ENCODE measurements at regions of chr18 and their contacts with region 1.

Region 1: GRCh38 chr18:7272311-7273049 is 41.6 kb downstream of the LRRC30 start:
- DNase-seq: peak; percentile 22 to 56
- ATAC-seq: peak; percentile 74 to 79
- H3K4me3 ChIP-seq: peak overlapping the region in 3 of 4 donors; percentile 8 to 26 (median 25)
- H3K27ac ChIP-seq: peak overlapping the region; percentile 56 to 78 (median 68)
- H3K4me1 ChIP-seq: peaks cover 0 to 5% of the 10 kb centered on the region in 2 donors
- H3K27me3 ChIP-seq: no peaks in the 10 kb centered on the region
- CTCF ChIP-seq: peak; percentile 10 to 67 (median 40)
- POLR2A ChIP-seq: no peak

Region 2: GRCh38 chr18:6948281-6949055 is 324.0 kb before region 1 on chr18:
- in situ Hi-C with region 1: no loop called
- intact Hi-C with region 1: no loop called
- DNase-seq: no peak
- ATAC-seq: no peak
- H3K4me3 ChIP-seq: no peak overlapping the region
- H3K27ac ChIP-seq: no peak overlapping the region
- H3K4me1 ChIP-seq: no peaks in the 10 kb centered on the region
- H3K27me3 ChIP-seq: no peaks in the 10 kb centered on the region
- CTCF ChIP-seq: no peak
- POLR2A ChIP-seq: no peak

Region 3: GRCh38 chr18:7117390-7118355 is 154.8 kb before region 1 on chr18 and contains the start of gene LAMA1:
- in situ Hi-C with region 1: no loop called
- intact Hi-C with region 1: no loop called
- DNase-seq: no peak
- ATAC-seq: no peak
- H3K4me3 ChIP-seq: peak within 1 kb of the TSS; percentile 43 to 65 (median 52)
- H3K27ac ChIP-seq: no peak within 1 kb of the TSS
- H3K4me1 ChIP-seq: peaks cover 10 to 15% of the 10 kb centered on the region in 2 donors
- H3K27me3 ChIP-seq: peaks cover 31 to 62% (median 47%) of the 10 kb centered on the region in 3 donors
- CTCF ChIP-seq: no peak
- POLR2A ChIP-seq: no peak
- total RNA-seq, gene LAMA1: 0.05 to 0.44 (median 0.09) TPM

Region 4: DNA sequence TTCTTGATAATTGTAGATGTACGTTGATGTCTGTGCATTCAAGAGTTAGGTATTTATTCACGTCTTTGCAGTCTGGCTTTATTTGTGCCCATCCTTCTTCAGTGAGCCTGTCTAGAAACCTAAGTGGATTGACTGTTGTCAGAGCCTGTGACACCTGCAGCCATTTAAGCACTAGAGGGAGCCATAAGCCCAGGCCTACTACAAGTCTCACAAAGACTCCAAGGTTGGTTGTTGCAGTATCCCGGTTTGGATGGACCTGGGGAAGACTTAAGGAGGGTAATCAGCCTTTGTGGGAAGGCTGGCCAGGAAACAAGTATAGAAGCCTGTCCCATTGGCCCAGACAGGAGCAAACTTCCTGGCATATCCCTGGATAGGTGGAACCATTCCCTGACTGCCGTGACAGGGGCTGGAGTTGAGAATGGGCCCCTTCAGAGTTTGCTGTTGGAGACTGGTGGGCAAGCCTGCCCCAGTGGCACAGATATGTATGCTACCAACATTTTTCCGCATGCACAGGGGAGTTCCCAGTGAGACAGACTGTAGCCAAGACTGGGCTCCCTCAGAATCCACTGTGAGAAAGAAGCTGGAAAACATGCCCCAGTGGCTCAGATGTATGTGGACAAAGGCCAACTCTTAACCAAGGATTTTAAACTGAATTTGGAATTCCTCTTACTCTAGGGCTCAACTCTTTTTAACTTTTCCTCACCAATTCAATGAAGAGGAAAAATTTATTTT is 50.9 kb before region 1 on chr18:
- in situ Hi-C with region 1: no loop called
- intact Hi-C with region 1: loop called (anchors 5 kb)
- DNase-seq: peak; percentile 22 to 66
- ATAC-seq: peak; percentile 98 to 100
- H3K4me3 ChIP-seq: no peak overlapping the region
- H3K27ac ChIP-seq: no peak overlapping the region
- H3K4me1 ChIP-seq: peaks cover 3 to 7% of the 10 kb centered on the region in 2 donors
- H3K27me3 ChIP-seq: no peaks in the 10 kb centered on the region
- CTCF ChIP-seq: peak; percentile 58 to 88 (median 80)
- POLR2A ChIP-seq: no peak

Region 5: DNA sequence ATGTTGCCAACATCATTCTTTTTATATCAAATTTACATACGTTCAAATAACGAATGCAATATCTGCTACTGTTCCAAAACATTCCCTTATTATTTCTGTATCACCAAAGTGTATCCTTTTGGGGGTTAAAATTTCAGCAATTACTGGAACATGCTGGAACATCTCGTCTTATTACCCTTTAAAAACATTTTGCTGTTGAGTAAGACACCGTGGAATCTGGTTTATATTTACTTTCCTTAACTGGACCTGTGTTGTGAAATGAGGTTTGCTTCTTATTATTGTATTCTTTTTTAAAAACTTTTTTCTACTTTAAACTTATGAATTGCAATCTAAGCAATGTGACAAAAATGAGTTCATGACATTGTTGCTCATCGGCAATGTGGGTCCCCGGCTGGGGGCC is 207.3 kb after region 1 on chr18:
- in situ Hi-C with region 1: no loop called
- intact Hi-C with region 1: no loop called
- DNase-seq: no peak
- ATAC-seq: no peak
- H3K4me3 ChIP-seq: no peak overlapping the region
- H3K27ac ChIP-seq: no peak overlapping the region
- H3K4me1 ChIP-seq: no peaks in the 10 kb centered on the region
- H3K27me3 ChIP-seq: no peaks in the 10 kb centered on the region
- CTCF ChIP-seq: no peak
- POLR2A ChIP-seq: no peak

Region 6: DNA sequence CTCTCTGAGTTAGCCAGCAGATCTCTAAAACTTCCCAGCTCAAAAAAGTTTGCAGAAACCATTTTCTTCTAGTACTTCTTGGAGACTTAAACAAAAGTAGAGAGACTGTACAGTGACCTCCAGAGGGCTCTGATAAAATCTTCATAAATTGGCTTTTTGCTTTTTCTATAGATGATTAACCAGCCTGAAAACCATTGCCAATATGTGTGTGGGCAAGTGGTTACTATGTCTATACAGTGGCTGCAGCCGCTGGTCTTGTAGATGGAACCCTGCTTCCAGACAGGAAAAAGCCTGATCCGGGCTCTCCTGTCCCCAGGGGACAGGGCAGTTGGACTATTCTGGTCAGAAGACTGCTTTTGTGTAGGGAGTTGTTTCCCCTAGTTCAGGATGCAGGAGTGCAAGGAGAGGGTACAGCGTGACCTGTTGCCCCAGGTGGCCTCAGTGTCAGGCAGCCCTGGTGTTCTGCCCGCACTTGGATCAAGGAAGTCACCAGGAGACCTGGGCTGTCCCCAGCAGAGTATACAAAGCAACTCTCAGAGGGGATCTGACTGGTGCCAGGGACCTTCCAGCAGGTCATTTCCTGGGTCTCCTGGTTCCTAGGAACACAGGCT is 287.3 kb after region 1 on chr18:
- in situ Hi-C with region 1: loop called in 1 of 4 experiments (anchors 10 kb)
- intact Hi-C with region 1: no loop called
- DNase-seq: no peak
- ATAC-seq: no peak
- H3K4me3 ChIP-seq: no peak overlapping the region
- H3K27ac ChIP-seq: peak overlapping the region in 2 of 4 donors; percentile 23 to 29
- H3K4me1 ChIP-seq: no peaks in the 10 kb centered on the region
- H3K27me3 ChIP-seq: no peaks in the 10 kb centered on the region
- CTCF ChIP-seq: no peak
- POLR2A ChIP-seq: no peak

Region 7: GRCh38 chr18:7755753-7756475 is 483.4 kb after region 1 on chr18:
- in situ Hi-C with region 1: no loop called
- intact Hi-C with region 1: loop called (anchors 10 kb)
- DNase-seq: no peak
- ATAC-seq: peak; percentile 59 to 76
- H3K4me3 ChIP-seq: no peak overlapping the region
- H3K27ac ChIP-seq: peak overlapping the region in 1 of 4 donors; percentile 21
- H3K4me1 ChIP-seq: peaks cover 52 to 70% of the 10 kb centered on the region in 2 donors
- H3K27me3 ChIP-seq: no peaks in the 10 kb centered on the region
- CTCF ChIP-seq: peak in 3 of 5 experiments; percentile 19 to 41 (median 37)
- POLR2A ChIP-seq: no peak

Region 8: GRCh38 chr18:8367217-8367988 is 1094.9 kb after region 1 on chr18:
- in situ Hi-C with region 1: no loop called
- intact Hi-C with region 1: loop called (anchors 10 kb)
- DNase-seq: peak; percentile 9 to 35
- ATAC-seq: peak; percentile 66 to 92
- H3K4me3 ChIP-seq: peak overlapping the region; percentile 32 to 64 (median 51)
- H3K27ac ChIP-seq: peak overlapping the region; percentile 28 to 52 (median 44)
- H3K4me1 ChIP-seq: peaks cover 12 to 29% of the 10 kb centered on the region in 2 donors
- H3K27me3 ChIP-seq: no peaks in the 10 kb centered on the region
- CTCF ChIP-seq: peak; percentile 27 to 79 (median 48)
- POLR2A ChIP-seq: no peak

Region 9: DNA sequence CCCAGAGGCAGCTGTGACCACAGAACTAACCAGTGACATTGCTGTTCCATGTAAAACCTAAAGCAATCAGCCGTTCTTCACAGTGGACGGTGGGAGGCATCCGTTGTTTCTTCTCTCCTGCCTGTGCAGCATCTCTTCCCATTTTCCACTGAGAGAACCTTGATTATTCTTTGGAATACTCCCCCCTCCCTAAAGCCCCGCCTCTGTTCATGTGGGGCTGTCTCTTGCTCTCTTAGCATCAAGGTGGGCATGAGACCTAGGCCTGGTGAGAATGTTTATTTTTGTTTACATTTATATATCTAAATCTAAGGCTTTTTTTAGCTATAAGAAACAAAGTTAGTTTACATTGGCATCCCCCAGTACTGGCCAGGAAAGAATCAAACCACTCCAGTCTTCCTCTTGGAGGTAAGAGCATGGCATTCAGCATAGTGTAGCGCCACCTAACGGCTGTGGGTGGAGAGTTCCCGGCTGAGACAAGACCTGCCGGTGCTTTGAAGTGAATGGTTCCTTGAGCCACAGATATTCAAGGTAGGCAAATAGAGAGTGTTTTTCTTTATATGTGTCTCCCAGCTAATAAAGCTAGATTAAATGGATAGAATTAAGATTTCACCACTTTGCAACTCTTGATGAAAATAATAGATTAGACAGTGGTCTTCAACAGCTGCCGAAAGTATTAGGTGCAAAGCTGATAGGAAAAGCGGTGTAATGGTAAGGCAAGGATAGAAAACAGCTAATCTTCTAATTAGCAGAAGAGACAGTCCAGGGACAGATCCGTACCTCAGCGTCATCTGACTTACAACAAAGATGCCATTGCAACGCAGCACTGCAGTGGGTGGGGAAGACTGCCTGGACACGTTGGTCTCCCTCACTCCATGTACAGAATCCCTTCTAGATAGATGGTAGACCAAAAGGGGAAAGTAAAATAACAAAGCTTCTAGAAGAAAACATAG is 1117.2 kb after region 1 on chr18:
- in situ Hi-C with region 1: loop called in 1 of 4 experiments (anchors 25 kb)
- intact Hi-C with region 1: no loop called
- DNase-seq: peak; percentile 22 to 55
- ATAC-seq: peak; percentile 66 to 93
- H3K4me3 ChIP-seq: no peak overlapping the region
- H3K27ac ChIP-seq: no peak overlapping the region
- H3K4me1 ChIP-seq: no peaks in the 10 kb centered on the region
- H3K27me3 ChIP-seq: no peaks in the 10 kb centered on the region
- CTCF ChIP-seq: peak; percentile 54 to 79 (median 70)
- POLR2A ChIP-seq: no peak

Measured in gastrocnemius medialis (tissue), 4 donors.